Prostate gland (tissue), 2 donors: ENCODE measurements at regions of chr10 and their contacts with region 1.

Region 1: DNA sequence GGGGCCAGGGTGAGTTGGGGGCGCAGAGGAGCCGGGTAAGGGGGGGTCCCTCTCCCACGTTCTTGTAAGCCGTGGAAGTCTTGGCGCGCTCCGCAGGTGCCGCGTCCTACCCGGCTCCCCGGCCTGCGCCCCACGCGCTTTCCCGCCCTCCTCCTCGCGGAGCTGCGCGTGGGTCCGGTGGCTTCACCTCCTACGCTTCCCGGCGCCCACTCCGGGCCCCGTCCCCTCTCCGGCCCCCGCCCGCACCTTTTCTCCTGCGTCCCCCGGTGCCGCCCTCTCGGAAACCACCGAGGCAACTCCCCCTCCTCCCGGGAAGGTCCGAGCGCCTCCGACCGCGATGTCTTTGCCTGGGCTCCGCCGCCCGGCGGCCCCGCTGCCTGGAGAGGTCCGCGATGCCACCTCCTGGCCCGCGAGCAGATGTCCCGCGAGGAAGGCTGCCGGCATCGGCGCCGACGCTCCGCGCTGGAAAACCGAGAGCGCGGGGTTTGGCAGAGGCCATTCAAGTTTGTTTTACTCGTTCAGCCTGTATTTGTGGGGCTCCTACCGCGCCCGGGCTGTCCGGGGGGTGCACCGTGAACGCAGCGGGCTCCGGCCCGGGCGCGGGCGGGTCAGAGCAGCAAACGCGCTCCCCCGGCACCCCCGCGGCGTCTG is 2.4 kb upstream of the NKX6-2 start:
- DNase-seq: peak; percentile 15
- H3K4me3 ChIP-seq: peak overlapping the region in 1 of 2 donors; percentile 18
- H3K27ac ChIP-seq: no peak overlapping the region
- H3K4me1 ChIP-seq: peaks cover 15% of the 10 kb centered on the region
- H3K27me3 ChIP-seq: peaks cover 34% of the 10 kb centered on the region
- CTCF ChIP-seq: peak in 2 of 4 experiments; percentile 27 to 30
- POLR2A ChIP-seq: no peak

Region 2: DNA sequence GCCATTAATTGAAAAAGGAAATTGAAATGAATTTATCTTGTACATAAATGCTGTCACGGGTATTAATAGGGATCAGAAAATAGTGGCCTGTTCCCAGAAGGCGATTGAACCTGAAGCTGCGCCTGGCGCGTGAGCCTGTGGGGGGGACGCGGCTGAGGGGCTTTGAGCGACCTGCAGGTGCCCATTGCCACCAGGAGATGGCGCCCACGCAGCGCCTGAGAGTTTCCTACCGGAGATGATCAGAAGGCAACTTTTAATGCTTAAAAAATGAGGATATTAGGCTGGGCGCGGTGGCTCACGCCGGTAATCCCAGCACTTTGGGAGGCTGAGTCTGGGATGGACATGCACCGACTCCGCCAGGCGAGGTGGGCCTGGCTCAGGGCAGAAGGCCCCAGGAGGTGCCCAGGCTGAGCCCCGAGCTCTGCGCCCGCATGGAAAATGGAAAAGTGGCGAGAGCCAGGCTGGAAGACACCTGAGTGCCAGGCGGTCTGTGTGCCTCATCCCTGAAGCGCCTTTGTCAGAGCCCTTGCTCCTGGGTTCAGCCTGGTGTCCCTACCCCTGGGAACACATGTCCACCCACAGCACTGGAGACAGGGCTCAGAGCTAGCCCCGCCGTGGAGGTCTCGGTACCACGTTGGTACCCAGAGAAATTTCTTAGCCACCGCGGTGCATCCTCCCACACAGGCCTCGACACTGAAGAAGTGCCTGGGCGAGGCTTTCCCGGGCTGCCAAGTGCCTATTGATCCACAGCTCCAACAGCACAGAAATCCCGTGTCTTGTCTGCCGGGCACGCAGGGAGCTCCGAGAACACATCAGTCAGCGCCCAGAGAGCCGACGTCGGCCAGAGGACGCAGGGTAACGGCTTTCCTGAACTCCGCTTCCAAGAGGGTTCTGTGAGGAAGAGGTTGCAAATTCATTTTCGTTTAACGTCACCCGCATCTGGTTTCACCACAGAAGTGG is 133.3 kb before region 1 on chr10:
- intact Hi-C with region 1: loop called (anchors 10 kb)
- DNase-seq: no peak
- H3K4me3 ChIP-seq: no peak overlapping the region
- H3K27ac ChIP-seq: no peak overlapping the region
- H3K4me1 ChIP-seq: no peaks in the 10 kb centered on the region
- H3K27me3 ChIP-seq: no peaks in the 10 kb centered on the region
- CTCF ChIP-seq: peak; percentile 68 to 88 (median 82)
- POLR2A ChIP-seq: no peak

Region 3: DNA sequence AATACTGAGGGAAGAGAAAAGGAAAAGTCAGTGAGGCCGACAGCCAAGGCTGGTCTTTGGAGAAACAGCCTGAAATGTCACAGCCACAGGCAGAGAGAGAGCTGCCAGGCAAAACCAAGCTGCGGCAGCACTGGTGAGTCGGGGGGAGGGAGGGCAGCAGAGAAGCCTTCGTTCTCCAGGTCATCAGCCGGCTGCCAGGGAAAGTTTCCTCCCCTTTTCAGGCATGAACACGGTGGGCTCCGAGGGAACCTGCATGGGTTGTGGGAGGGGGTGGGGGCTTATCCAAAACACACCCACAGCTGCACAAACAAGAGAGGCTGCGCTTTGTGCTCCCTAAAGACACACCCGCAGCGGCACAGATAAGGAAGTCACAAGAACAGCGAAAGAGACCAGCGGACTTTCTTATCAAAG is 60.0 kb after region 1 on chr10:
- intact Hi-C with region 1: no loop called
- DNase-seq: no peak
- H3K4me3 ChIP-seq: no peak overlapping the region
- H3K27ac ChIP-seq: no peak overlapping the region
- H3K4me1 ChIP-seq: no peaks in the 10 kb centered on the region
- H3K27me3 ChIP-seq: peaks cover 8% of the 10 kb centered on the region
- CTCF ChIP-seq: no peak
- POLR2A ChIP-seq: no peak